Caco-2 (cell line): ENCODE measurements at regions of chr5 and their contacts with region 1.

Region 1: DNA sequence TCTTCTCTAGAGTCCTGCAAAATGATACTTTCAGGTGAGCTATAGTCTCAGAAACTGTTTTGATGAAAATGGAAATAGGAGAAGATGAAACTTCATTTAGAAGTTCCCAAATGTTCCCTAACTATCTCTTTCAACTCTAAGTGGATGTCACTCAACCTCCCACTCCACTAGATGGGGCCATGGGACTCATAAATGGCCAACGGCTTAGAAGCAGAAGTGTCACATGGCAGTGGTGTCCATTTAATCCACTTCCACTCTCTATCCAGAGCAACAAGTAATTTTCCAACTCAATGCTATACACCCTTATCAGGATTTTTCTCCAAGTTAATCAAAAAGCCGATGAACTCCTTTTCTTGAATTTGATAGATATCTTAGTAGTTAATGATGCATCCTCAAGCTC is 295.7 kb downstream of the EDIL3 start:
- DNase-seq: peak in 1 of 2 experiments; percentile 19
- H3K4me3 ChIP-seq: no peak overlapping the region
- H3K4me3 Mint-ChIP-seq: no peak overlapping the region
- H3K27ac Mint-ChIP-seq: no peak overlapping the region
- H3K4me1 ChIP-seq: peaks cover 8% of the 10 kb centered on the region; the same call in 1 of the 2 replicates
- H3K4me1 Mint-ChIP-seq: peaks cover 9% of the 10 kb centered on the region
- H3K27me3 ChIP-seq: no peaks in the 10 kb centered on the region; the same call in 1 of the 2 replicates
- H3K27me3 Mint-ChIP-seq: peaks cover 10% of the 10 kb centered on the region
- CTCF ChIP-seq: peak; percentile 25 to 30

Region 2: DNA sequence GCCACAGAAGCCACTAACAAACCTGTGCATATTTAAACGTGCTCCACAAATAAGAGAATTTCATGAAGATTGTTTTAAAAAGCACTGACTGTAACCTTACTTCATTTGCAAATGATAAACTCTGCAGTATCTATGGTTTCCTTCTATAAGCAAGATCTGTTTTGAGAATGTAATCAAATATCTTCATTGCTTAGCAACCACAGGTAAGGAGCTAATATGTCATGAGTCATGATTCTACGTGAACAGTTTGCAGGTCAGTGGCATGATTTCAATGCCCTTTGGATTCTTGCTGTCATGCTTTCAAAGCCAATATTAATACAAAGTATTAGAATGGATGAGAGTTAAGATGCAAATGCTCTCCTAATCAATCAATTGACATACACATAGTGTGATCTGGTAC is 29.3 kb before region 1 on chr5:
- CTCF ChIA-PET with region 1: no interaction called
- POLR2A ChIA-PET with region 1: no interaction called
- intact Hi-C with region 1: no loop called
- DNase-seq: no peak
- H3K4me3 ChIP-seq: no peak overlapping the region
- H3K4me3 Mint-ChIP-seq: no peak overlapping the region
- H3K27ac Mint-ChIP-seq: no peak overlapping the region
- H3K4me1 ChIP-seq: no peaks in the 10 kb centered on the region
- H3K4me1 Mint-ChIP-seq: no peaks in the 10 kb centered on the region
- H3K27me3 ChIP-seq: no peaks in the 10 kb centered on the region
- H3K27me3 Mint-ChIP-seq: peaks cover 5% of the 10 kb centered on the region
- CTCF ChIP-seq: no peak

Region 3: GRCh38 chr5:84163671-84164070 is 74.7 kb after region 1 on chr5:
- CTCF ChIA-PET with region 1: no interaction called
- POLR2A ChIA-PET with region 1: no interaction called
- intact Hi-C with region 1: loop called (anchors 2 kb)
- DNase-seq: no peak
- H3K4me3 ChIP-seq: no peak overlapping the region
- H3K4me3 Mint-ChIP-seq: no peak overlapping the region
- H3K27ac Mint-ChIP-seq: no peak overlapping the region
- H3K4me1 ChIP-seq: no peaks in the 10 kb centered on the region
- H3K4me1 Mint-ChIP-seq: no peaks in the 10 kb centered on the region
- H3K27me3 ChIP-seq: no peaks in the 10 kb centered on the region
- H3K27me3 Mint-ChIP-seq: peaks cover under 1% of the 10 kb centered on the region
- CTCF ChIP-seq: no peak

Region 4: DNA sequence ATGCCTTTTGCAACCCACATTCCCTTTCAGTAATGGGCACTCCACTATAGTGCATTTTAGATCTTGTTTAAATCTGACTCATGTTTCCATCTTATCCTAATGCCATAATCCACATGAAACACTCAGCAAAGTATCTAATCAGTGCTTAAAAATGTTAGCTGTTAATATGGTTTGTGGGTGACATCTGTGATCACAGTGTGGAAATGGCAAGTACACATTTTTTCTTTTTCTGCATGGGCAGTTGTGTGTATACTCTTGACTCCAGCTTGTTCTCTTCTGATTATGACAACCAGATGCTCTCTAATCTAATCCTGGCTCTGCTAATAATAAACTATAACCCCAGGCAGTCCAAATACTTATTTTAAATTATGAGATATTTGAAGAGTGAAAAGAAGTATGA is 192.4 kb after region 1 on chr5:
- CTCF ChIA-PET with region 1: no interaction called
- POLR2A ChIA-PET with region 1: no interaction called
- intact Hi-C with region 1: no loop called
- DNase-seq: no peak
- H3K4me3 ChIP-seq: no peak overlapping the region
- H3K4me3 Mint-ChIP-seq: no peak overlapping the region
- H3K27ac Mint-ChIP-seq: no peak overlapping the region
- H3K4me1 ChIP-seq: no peaks in the 10 kb centered on the region
- H3K4me1 Mint-ChIP-seq: no peaks in the 10 kb centered on the region
- H3K27me3 ChIP-seq: no peaks in the 10 kb centered on the region
- H3K27me3 Mint-ChIP-seq: peaks cover 3% of the 10 kb centered on the region
- CTCF ChIP-seq: no peak